Heart right ventricle (tissue), 16 donors: ENCODE measurements at regions of chr16 and their contacts with region 1.

Region 1: DNA sequence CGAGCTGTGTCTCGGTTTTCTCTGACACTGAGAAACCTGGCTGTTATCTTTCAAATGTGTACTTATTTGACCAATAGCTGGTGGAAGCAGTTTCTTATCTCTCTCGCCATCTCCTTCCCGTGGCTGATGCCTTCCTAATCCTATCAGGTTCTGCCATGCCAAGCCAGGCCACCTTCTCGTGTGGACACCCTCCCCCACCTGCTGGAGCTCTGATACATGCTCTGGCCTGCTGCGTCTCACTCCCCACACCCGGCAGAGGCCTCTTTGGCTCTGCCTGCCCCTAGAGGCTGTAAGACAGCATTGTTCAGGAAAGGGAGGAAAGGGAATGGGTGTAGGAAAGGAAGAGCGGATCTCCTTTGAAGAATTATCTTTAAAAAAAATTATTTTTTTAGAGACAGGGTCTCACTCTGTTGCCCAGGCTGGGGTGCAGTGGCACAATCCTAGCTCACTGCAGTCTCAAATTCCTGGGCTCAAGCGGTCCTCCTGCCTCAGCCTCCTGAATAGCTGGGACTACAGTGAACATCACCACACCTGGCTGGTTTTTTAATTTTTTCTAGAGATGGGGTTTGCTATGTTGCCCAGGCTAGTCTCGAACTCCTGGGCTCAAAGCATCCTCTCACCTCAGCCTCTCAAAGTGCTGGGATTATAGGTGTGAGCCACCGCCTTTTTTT is 7.5 kb upstream of the ARMC5 start:
- DNase-seq: peak; percentile 47
- ATAC-seq: peak; percentile 42 to 78 (median 74)
- H3K4me3 ChIP-seq: no peak overlapping the region
- H3K27ac ChIP-seq: peak overlapping the region in 8 of 10 donors; percentile 18 to 77 (median 54)
- H3K4me1 ChIP-seq: peaks cover 10 to 57% (median 47%) of the 10 kb centered on the region in 9 donors
- H3K27me3 ChIP-seq: no peaks in the 10 kb centered on the region
- CTCF ChIP-seq: peak in 8 of 9 donors; percentile 38 to 62 (median 55)

Region 2: DNA sequence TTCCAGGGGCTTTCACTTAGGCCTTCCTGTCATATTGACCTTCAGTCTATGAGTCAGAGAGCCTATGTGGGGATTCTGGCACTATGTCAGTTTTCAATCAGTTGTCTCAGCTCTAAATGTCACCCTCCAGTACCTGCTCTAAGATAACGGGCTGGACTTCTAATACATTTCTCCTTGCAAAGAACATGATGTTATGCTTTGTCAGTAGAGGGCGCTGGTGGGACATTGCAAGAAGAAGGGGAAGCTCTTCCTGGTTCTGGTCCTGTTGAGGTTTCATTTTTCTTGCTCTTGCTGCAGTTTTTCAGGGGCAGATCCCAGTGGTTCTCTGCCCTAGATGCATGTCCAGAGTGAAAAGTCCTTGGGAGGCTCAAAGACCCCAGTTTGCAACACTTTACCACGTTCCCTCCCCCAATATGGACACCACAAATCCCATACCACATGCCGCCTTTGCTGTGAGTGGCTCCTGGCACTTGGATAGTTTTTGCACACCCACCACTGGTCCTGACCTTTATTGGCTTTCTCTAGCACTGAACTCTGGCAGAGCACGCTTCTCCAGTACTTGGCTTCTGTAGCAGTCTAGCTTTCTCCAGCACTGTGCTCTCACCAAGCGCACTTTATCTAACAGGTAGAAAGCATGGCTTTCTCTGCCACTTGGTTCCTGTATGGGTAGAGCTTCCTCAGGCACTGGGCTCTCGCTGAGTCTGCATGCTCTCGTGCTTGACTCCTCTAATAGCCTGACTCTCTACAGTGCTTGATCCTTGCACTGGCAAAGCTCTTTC is 607.0 kb before region 1 on chr16:
- intact Hi-C with region 1: no loop called
- DNase-seq: peak; percentile 22 to 88
- ATAC-seq: peak; percentile 74 to 91 (median 86)
- H3K4me3 ChIP-seq: peak overlapping the region in 6 of 10 donors; percentile 28 to 39 (median 35)
- H3K27ac ChIP-seq: peak overlapping the region in 9 of 10 donors; percentile 27 to 71 (median 63)
- H3K4me1 ChIP-seq: peaks cover 4 to 29% (median 13%) of the 10 kb centered on the region in 9 donors
- H3K27me3 ChIP-seq: no peaks in the 10 kb centered on the region
- CTCF ChIP-seq: peak; percentile 83 to 92 (median 89)

Region 3: DNA sequence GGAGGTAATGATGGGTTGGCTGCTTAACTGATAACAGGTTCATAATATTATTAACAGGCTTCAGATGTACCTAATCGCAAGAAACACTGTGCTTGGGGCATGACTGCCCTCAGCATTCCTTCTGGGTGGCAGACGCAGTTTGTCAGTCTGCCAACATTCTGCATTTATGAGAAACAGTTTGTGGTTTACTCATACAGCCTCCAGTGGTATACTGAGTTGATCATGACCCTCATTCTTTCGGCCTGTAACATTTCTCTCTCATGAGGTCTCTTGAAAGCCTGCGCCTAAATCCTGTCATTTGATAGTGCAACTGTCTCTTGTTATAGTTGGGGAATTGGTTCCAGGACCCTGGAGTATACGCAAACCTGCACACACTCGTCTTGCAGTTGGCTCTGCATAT is 61.3 kb after region 1 on chr16:
- intact Hi-C with region 1: no loop called
- DNase-seq: no peak
- ATAC-seq: no peak
- H3K4me3 ChIP-seq: no peak overlapping the region
- H3K27ac ChIP-seq: no peak overlapping the region
- H3K4me1 ChIP-seq: peaks cover 3 to 15% (median 11%) of the 10 kb centered on the region in 9 donors
- H3K27me3 ChIP-seq: peaks cover 0 to 5% (median 0%) of the 10 kb centered on the region in 7 donors
- CTCF ChIP-seq: no peak

Region 4: DNA sequence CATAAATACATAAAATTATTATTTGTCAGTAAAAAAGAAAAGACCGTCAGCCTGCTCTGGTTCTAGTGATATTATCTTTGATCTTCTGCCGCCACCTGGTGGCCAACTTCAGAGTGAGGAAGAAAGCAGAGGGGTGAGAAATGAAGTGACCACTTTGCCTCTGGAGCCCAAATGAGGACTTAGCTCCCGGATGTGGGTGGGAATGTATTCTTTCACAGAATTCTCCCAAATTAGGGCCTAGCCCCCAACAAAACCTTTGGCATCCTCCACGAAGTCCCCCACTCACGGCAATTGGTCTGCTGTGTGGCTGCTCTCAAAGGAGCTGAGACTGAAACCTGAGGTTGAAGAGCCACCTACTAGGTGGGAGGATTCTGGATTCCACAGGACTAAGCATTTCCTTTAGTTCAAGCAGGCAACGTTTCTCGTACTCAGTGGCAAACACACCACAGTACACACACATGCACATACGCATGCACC is 416.9 kb after region 1 on chr16:
- intact Hi-C with region 1: loop called in 4 of 10 experiments (anchors 5 to 10 kb)
- DNase-seq: peak; percentile 63 to 82
- ATAC-seq: peak; percentile 38 to 78 (median 66)
- H3K4me3 ChIP-seq: peak overlapping the region in 2 of 10 donors; percentile 20 to 22
- H3K27ac ChIP-seq: peak overlapping the region in 4 of 10 donors; percentile 0 to 93 (median 36)
- H3K4me1 ChIP-seq: peaks cover 0 to 36% (median 8%) of the 10 kb centered on the region in 9 donors
- H3K27me3 ChIP-seq: peaks cover 0 to 4% (median 0%) of the 10 kb centered on the region in 7 donors
- CTCF ChIP-seq: peak; percentile 74 to 91 (median 83)